A549 (cell line): ENCODE measurements at regions of chr9 and their contacts with region 1.

Region 1: GRCh38 chr9:111597817-111598729 is 1.4 kb downstream of the PTGR1 start:
- DNase-seq: peak; percentile 58 to 78
- ATAC-seq: peak; percentile 11 to 43; a peak in 5 of 6 replicates
- H3K4me3 ChIP-seq: peak overlapping the region; percentile 96
- H3K27ac ChIP-seq: peak overlapping the region; percentile 92 to 94
- H3K4me1 ChIP-seq: peaks cover 75% of the 10 kb centered on the region
- CTCF ChIP-seq: peak; percentile 87
- EP300 ChIP-seq: no peak
- POLR2A ChIP-seq: no peak
- RAD21 ChIP-seq: peak; percentile 80 to 86

Region 2: DNA sequence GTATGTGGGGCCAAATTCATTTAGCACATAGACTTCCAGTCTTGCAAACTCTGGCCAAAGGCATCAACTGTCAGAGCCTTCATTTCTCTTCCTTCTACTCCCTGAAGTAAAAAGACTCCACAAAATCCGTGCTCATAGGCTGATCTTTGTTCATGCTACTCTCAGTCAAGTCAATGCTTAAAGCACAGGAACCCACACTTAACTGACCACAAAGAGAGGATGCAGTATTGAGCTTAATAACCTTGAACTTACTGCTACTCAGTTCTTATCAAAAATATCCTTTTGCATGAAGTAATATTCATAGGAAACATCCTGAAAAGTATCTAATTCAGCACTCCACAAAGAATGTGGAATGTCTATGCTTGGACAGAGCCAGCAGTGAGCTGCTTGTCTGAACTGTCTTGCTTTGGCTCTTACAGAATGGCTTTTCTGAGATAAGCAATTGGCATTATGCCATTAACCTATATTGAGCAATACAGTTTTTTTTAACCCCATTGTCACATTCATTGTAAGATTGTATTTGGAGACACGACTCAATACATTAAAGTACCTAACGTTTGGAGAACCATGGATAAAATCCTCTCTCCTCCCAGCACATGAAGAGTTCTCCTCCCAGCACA is 581.5 kb before region 1 on chr9:
- CTCF ChIA-PET with region 1: no interaction called
- POLR2A ChIA-PET with region 1: no interaction called
- DNase-seq: no peak
- ATAC-seq: peak; percentile 24 to 52; a peak in 2 of 6 replicates
- H3K4me3 ChIP-seq: no peak overlapping the region
- H3K27ac ChIP-seq: 0 out of 6 replicates have a peak overlapping the region, but pooled peaks of 1 of the 2 experiments have one; percentile 5
- H3K4me1 ChIP-seq: peaks cover 33% of the 10 kb centered on the region
- CTCF ChIP-seq: no peak
- EP300 ChIP-seq: no peak
- POLR2A ChIP-seq: no peak
- RAD21 ChIP-seq: no peak

Region 3: GRCh38 chr9:111548623-111549022 is 49.5 kb before region 1 on chr9:
- CTCF ChIA-PET with region 1: no interaction called
- POLR2A ChIA-PET with region 1: no interaction called
- DNase-seq: no peak
- ATAC-seq: no peak
- H3K4me3 ChIP-seq: no peak overlapping the region
- H3K27ac ChIP-seq: no peak overlapping the region
- H3K4me1 ChIP-seq: no peaks in the 10 kb centered on the region
- CTCF ChIP-seq: no peak
- EP300 ChIP-seq: no peak
- POLR2A ChIP-seq: no peak
- RAD21 ChIP-seq: no peak

Region 4: DNA sequence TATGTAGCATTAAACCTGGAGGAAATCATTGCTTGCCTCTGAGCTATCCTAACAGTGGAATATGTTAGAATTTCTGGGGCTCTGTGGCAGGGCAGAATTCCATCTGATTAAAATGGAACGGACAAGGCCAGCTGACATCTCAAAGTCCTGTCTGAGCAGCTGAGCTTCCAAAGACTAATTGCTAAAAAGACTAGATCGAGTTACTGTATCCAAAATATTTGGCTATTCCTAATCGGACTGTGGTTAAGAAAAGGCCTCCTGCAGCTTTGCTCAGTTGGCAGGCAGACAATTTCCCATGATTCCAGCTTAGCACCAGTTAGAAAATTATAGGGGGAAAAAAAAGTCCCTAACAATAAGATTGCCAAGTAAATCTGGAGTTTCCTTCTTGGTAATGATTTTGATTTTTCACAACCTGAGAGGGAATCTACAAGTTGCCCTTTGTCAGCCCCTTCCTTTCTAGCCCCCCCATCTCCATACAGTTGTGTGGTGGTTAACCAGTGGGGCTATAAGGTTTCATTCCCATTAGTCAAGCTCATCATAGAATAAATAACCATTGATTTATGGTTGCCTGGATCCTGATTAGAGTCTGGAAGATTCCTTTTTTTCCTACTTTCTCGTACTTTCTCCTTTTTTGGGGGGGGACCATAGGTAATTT is 25.0 kb before region 1 on chr9:
- CTCF ChIA-PET with region 1: interaction called, 12 read pairs
- POLR2A ChIA-PET with region 1: interaction called, 5 read pairs
- DNase-seq: no peak
- ATAC-seq: no peak
- H3K4me3 ChIP-seq: no peak overlapping the region
- H3K27ac ChIP-seq: no peak overlapping the region
- H3K4me1 ChIP-seq: no peaks in the 10 kb centered on the region
- CTCF ChIP-seq: no peak
- EP300 ChIP-seq: no peak
- POLR2A ChIP-seq: no peak
- RAD21 ChIP-seq: no peak

Region 5: GRCh38 chr9:111613441-111614039 is 15.5 kb after region 1 on chr9:
- CTCF ChIA-PET with region 1: interaction called, 13 read pairs
- POLR2A ChIA-PET with region 1: interaction called, 4 read pairs
- DNase-seq: peak in 1 of 2 experiments; percentile 52
- ATAC-seq: peak; percentile 52 to 82; a peak in 4 of 6 replicates
- H3K4me3 ChIP-seq: no peak overlapping the region
- H3K27ac ChIP-seq: peak overlapping the region; percentile 39 to 63
- H3K4me1 ChIP-seq: peaks cover 13% of the 10 kb centered on the region
- CTCF ChIP-seq: no peak; the same call in 2 of the 3 replicates
- EP300 ChIP-seq: no peak
- POLR2A ChIP-seq: no peak
- RAD21 ChIP-seq: peak in 1 of 2 experiments; percentile 33; a peak in 3 of 5 replicates

Region 6: DNA sequence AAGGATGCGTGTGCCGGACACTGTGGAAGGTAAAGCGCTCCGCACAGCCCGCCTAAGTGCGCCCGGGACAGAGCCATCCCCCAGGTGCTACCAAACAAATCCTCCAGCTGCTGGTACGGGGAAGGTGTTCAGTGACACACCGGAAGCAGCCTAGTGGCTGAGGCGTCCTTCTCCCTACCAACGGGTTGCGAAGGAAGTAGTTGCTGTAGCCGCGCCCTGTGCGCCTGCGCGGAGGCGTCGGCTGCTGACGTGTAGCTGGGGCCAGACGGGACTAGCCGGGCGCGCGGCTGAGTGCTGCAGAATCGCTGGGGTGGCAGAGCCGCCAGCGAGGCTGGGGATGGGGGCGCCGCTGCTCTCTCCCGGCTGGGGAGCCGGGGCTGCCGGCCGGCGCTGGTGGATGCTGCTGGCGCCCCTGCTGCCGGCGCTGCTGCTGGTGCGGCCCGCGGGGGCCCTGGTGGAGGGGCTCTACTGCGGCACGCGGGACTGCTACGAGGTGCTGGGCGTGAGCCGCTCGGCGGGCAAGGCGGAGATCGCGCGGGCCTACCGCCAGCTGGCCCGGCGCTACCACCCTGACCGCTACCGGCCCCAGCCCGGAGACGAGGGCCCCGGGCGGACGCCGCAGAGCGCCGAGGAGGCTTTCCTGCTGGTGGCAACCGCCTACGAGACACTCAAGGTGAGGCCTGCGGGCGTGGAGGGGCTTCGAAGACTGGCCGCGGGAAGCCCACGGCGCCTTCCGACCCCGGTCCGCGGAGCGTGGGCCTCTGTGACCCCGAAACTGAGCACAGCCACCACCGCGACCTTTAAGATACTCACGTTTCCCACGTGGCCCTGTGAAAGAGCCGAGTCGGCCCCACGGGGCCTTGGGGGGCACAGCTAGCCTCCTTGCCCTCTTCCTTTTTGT is 33.2 kb after region 1 on chr9 and contains the start of gene DNAJC25:
- CTCF ChIA-PET with region 1: interaction called, 112 read pairs
- POLR2A ChIA-PET with region 1: interaction called, 37 read pairs
- DNase-seq: peak; percentile 99
- ATAC-seq: peak; percentile 97 to 98
- H3K4me3 ChIP-seq: peak within 1 kb of the TSS; percentile 85
- H3K27ac ChIP-seq: peak within 1 kb of the TSS; percentile 89 to 96
- H3K4me1 ChIP-seq: peaks cover 43% of the 10 kb centered on the region; the same call in 2 of the 3 replicates
- CTCF ChIP-seq: no peak
- EP300 ChIP-seq: no peak
- POLR2A ChIP-seq: peak; percentile 99
- RAD21 ChIP-seq: 0 out of 5 replicates have a peak, but pooled peaks of 1 of the 2 experiments have one; percentile 34
- polyA plus RNA-seq, gene DNAJC25: 8.4 and 12.1 TPM in 2 replicates

Region 7: GRCh38 chr9:111743275-111743674 is 145.2 kb after region 1 on chr9:
- CTCF ChIA-PET with region 1: interaction called, 14 read pairs
- POLR2A ChIA-PET with region 1: interaction called, 5 read pairs
- DNase-seq: peak; percentile 45 to 83
- ATAC-seq: peak; percentile 100
- H3K4me3 ChIP-seq: no peak overlapping the region
- H3K27ac ChIP-seq: peak overlapping the region; percentile 85 to 86; a peak in 5 of 6 replicates
- H3K4me1 ChIP-seq: peaks cover 23% of the 10 kb centered on the region
- CTCF ChIP-seq: no peak
- EP300 ChIP-seq: peak; percentile 29 to 66; a peak in 2 of 5 replicates
- POLR2A ChIP-seq: no peak
- RAD21 ChIP-seq: 0 out of 5 replicates have a peak, but pooled peaks of 1 of the 2 experiments have one; percentile 22